GM12878 (cell line): ENCODE measurements at regions of chr3 and their contacts with region 1.

Region 1: GRCh38 chr3:192802957-192803899 is 75.9 kb upstream of the FGF12 start:
- DNase-seq: no peak
- ATAC-seq: peak; percentile 87
- H3K4me3 ChIP-seq: no peak overlapping the region
- H3K27ac ChIP-seq: no peak overlapping the region
- H3K4me1 ChIP-seq: no peaks in the 10 kb centered on the region
- H3K27me3 ChIP-seq: no peaks in the 10 kb centered on the region
- CTCF ChIP-seq: peak; percentile 47 to 50 (median 47)
- EP300 ChIP-seq: no peak
- POLR2A ChIP-seq: no peak
- RAD21 ChIP-seq: peak; percentile 34; the same call in 1 of the 2 replicates

Region 2: DNA sequence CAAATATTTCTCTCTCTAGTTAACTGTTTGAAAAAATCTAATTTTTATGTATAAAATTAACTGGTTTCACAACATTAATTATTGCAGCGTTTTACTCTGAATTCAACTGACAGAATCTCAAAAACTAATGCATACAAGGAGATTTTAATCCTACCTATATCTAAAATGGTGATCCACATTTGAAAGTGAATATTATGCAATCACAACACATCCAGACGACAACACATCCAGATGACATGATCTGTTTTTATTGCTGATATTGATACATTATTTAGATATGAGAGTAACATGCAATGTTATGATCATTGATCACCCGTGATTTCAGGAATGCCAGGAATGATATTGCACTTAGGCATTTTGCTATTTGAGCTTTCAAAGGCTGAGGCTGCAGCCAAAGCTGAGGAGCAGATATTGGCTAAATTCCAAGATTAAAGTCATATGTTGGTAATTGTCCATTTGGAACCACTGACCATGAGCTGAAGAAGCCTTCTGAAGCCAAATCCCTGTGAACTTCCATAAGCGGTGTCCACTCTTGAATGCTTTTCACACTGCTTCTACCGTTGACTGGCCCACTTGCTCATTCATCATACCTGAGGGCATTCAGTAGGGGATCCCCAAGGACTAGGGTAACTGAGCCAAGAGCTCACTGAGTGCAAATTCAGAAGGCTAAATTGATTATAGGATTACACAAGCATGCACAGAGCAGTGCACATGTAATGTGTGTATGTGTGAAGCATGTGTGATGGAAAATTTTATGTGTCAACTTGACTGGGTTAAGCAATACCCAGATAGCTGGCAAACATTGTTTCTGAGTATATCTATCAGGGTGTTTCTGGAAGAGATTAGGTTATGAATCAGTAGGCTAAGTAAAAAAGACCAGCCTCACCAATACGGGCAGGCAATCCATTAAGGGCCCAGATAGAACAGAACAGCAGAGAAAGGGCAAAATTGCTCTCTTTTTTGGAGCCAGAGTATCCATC is 345.6 kb after region 1 on chr3:
- CTCF ChIA-PET with region 1: no interaction called
- POLR2A ChIA-PET with region 1: no interaction called
- RAD21 ChIA-PET with region 1: no interaction called
- SMC1A ChIA-PET with region 1: no interaction called
- in situ Hi-C with region 1: no loop called
- intact Hi-C with region 1: no loop called
- DNase-seq: no peak
- ATAC-seq: no peak
- H3K4me3 ChIP-seq: no peak overlapping the region
- H3K27ac ChIP-seq: no peak overlapping the region
- H3K4me1 ChIP-seq: no peaks in the 10 kb centered on the region
- H3K27me3 ChIP-seq: no peaks in the 10 kb centered on the region; a peak in 2 of 4 replicates
- CTCF ChIP-seq: no peak
- EP300 ChIP-seq: no peak
- POLR2A ChIP-seq: no peak
- RAD21 ChIP-seq: no peak

Region 3: DNA sequence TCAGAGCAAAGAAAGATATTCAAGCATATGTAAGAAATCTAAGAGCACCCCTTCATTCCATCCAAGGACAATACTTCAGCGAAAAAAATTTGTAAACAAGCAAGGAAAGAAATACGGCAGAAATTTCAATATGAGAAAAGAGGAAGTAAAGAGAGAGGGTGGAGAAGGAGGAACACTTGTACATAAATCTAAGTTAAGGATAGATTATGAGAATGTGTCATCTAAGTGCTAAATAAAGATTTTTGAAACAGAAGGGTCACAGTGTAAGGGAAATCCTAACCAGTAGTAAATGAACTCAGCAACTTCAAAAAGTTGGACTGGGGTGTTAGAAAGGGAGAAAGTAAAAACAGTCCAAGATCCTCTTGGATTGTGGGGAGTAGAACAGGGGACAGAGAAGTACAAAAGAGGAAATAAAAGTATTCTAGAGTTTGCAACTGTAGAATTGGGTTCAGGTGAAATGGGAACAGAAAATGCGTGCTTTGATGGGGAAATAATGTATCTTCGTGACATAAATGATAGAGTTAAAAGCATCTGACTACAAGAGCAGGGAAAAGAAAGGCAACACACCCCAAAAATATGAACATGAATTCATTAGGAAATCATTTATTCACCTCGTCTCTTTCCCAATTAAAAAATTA is 643.9 kb after region 1 on chr3:
- CTCF ChIA-PET with region 1: interaction called, 3 read pairs
- POLR2A ChIA-PET with region 1: no interaction called
- RAD21 ChIA-PET with region 1: no interaction called
- SMC1A ChIA-PET with region 1: no interaction called
- in situ Hi-C with region 1: no loop called
- intact Hi-C with region 1: loop called (anchors 5 kb)
- DNase-seq: no peak
- ATAC-seq: no peak
- H3K4me3 ChIP-seq: no peak overlapping the region
- H3K27ac ChIP-seq: no peak overlapping the region
- H3K4me1 ChIP-seq: no peaks in the 10 kb centered on the region
- H3K27me3 ChIP-seq: no peaks in the 10 kb centered on the region
- CTCF ChIP-seq: no peak
- EP300 ChIP-seq: no peak
- POLR2A ChIP-seq: no peak
- RAD21 ChIP-seq: no peak